B cell (primary cell): ENCODE measurements at regions of chr2 and their contacts with region 1.

Region 1: DNA sequence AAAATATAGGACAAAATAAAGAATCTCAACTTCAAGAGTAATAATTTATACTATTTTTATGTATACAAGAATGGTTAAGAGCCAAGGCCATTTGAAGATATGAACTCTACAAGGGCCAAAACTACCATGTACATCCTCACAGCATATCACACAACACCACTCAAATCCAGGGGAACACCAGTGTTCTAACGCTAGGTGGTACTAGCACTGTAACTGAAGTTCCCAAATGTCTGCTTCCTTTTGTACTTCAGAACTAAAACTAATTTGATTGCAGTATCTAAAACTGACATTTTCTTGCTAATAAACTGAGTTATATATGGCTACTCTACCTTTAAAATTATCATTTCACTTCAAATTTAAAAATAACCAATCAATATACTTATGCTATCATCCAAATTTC is 47.0 kb downstream of the REV1 start:
- DNase-seq: peak; percentile 10
- ATAC-seq: no peak
- H3K4me3 ChIP-seq: no peak overlapping the region
- H3K4me3 Mint-ChIP-seq: no peak overlapping the region
- H3K27ac ChIP-seq: no peak overlapping the region
- H3K27ac Mint-ChIP-seq: no peak overlapping the region
- H3K4me1 ChIP-seq: no peaks in the 10 kb centered on the region
- H3K4me1 Mint-ChIP-seq: no peaks in the 10 kb centered on the region
- H3K27me3 ChIP-seq: no peaks in the 10 kb centered on the region
- H3K27me3 Mint-ChIP-seq: no peaks in the 10 kb centered on the region
- CTCF ChIP-seq: no peak

Region 2: GRCh38 chr2:99348173-99348572 is 94.7 kb before region 1 on chr2:
- CTCF ChIA-PET with region 1: no interaction called
- POLR2A ChIA-PET with region 1: no interaction called
- intact Hi-C with region 1: no loop called
- DNase-seq: no peak
- ATAC-seq: no peak
- H3K4me3 ChIP-seq: no peak overlapping the region
- H3K4me3 Mint-ChIP-seq: no peak overlapping the region
- H3K27ac ChIP-seq: peak overlapping the region in 1 of 2 donors; percentile 1
- H3K27ac Mint-ChIP-seq: peak overlapping the region; percentile 54
- H3K4me1 ChIP-seq: peaks cover 5 to 20% of the 10 kb centered on the region in 2 donors
- H3K4me1 Mint-ChIP-seq: peaks cover 44% of the 10 kb centered on the region
- H3K27me3 ChIP-seq: no peaks in the 10 kb centered on the region
- H3K27me3 Mint-ChIP-seq: no peaks in the 10 kb centered on the region
- CTCF ChIP-seq: no peak

Region 3: DNA sequence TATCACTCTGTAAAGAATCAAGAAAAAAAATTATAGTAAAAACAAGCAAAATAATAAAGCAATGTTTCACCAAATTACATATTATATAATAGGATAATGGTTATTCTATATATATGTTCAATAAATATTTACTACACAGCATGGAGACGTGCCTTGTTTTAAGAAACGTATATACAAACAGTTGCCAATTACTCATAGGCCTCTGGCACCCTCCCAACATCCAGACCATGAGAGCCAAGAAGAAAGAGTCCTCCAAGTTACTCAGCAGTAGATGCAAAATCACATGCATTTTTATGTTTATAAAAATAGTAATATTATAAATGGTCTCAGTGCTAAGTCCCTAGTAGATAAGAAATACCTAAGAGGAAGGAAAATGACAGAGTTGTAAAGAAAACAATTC is 17.8 kb before region 1 on chr2:
- CTCF ChIA-PET with region 1: no interaction called
- POLR2A ChIA-PET with region 1: no interaction called
- intact Hi-C with region 1: no loop called
- DNase-seq: no peak
- ATAC-seq: no peak
- H3K4me3 ChIP-seq: no peak overlapping the region
- H3K4me3 Mint-ChIP-seq: no peak overlapping the region
- H3K27ac ChIP-seq: no peak overlapping the region
- H3K27ac Mint-ChIP-seq: no peak overlapping the region
- H3K4me1 ChIP-seq: no peaks in the 10 kb centered on the region
- H3K4me1 Mint-ChIP-seq: no peaks in the 10 kb centered on the region
- H3K27me3 ChIP-seq: no peaks in the 10 kb centered on the region
- H3K27me3 Mint-ChIP-seq: no peaks in the 10 kb centered on the region
- CTCF ChIP-seq: no peak

Region 4: DNA sequence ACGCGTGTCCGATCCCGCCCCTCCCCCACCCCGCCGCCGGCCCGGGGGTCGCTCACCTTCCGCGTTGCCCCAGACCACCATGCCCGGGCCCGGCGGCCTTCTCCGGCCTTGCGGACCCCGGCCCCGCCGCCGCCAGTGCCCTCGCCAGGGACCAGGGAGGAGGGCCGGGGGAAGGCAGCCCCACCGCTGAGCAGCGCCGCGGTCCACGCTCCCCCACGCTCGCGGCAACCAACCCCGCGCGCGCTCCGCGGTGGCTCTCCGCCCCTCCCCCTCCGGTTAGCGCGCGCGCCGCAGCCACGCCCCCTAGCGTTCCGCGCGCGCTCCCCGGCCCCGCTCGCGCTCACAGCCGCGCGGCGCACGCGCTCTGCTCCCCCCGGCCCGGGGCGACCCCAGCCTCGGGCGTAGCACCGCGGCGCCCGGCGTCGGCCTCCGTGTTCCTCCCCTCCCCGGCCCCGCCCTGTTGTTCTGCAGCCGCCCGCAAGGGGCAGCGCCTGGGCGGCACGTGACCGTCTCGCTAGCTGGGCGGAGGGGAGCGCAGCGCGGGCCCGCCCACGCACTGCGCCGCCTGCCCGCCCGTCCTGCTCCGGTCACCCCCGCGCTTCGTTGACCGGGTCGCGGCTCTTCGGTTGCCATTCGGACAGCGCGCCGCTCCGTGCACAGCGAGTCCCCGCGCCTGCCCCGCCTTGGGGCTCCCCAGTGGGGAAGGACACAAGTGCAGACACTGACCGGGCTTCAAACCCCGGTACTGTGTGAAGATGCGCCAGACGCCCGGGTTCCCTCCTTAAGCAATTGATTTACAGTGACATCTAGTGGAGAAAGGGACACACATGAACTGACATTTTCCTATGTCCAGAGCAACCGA is 47.2 kb after region 1 on chr2 and contains the start of gene REV1:
- CTCF ChIA-PET with region 1: interaction called, 5 read pairs
- POLR2A ChIA-PET with region 1: no interaction called
- intact Hi-C with region 1: loop called (anchors 2 kb)
- DNase-seq: peak; percentile 99
- ATAC-seq: peak; percentile 85
- H3K4me3 ChIP-seq: peak within 1 kb of the TSS; percentile 58 to 81 (median 80)
- H3K4me3 Mint-ChIP-seq: peak within 1 kb of the TSS; percentile 99
- H3K27ac ChIP-seq: peak within 1 kb of the TSS; percentile 79 to 80
- H3K27ac Mint-ChIP-seq: peak within 1 kb of the TSS; percentile 99
- H3K4me1 ChIP-seq: peaks cover 10 to 27% of the 10 kb centered on the region in 2 donors
- H3K4me1 Mint-ChIP-seq: peaks cover 29% of the 10 kb centered on the region
- H3K27me3 ChIP-seq: no peaks in the 10 kb centered on the region
- H3K27me3 Mint-ChIP-seq: peaks cover 12% of the 10 kb centered on the region
- CTCF ChIP-seq: peak; percentile 83
- total RNA-seq, gene REV1: 69.5 and 70.5 TPM in 2 replicates